Left colon (tissue), 2 donors: ENCODE measurements at regions of chr1 and their contacts with region 1.

Region 1: DNA sequence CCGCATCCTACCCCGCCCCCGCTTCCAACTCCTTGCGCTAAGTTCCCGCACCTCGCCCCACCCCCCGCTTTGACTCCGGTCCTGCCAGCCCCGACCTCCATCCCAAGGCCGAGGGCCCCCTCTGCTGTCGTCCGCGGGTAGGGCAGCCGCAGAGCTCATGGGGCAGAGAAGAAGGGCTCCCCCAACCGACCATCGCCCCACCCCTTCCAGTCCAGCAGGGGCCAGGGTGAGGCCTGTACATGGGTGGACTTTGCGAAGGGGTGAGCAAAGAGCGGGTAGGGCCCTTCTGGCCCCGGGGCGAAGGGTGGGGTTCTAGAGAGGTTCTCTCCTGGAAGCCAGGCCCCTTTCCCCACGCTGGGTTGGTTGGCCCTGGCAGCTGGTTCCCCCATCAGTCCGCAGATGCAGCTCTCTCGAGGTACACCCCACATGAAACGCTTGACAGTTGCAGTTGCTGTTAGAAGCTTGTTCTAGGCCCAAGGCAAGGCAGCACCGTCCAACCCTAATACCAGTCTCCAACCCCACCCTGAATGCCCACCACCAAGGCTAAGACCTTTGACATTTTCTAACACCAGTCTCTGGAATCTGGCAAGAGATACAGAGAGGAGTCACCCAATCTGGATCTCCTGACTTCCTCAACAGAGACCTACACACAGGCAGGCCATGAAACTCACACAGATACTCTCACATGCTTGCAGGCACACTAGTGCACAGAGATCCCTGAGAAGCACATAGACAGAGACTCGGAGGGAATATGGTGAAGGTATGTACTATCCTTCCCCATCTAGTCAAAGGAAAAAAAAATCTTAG is 25.3 kb upstream of the ADGRB2 start:
- DNase-seq: peak; percentile 93 to 99
- ATAC-seq: peak; percentile 86

Region 2: GRCh38 chr1:31658721-31659120 is 130.7 kb before region 1 on chr1:
- intact Hi-C with region 1: loop called (anchors 5 to 10 kb)
- DNase-seq: no peak
- ATAC-seq: no peak